Cardiac septum (tissue), 1 donor: ENCODE measurements at regions of chr2 and their contacts with region 1.

Region 1: DNA sequence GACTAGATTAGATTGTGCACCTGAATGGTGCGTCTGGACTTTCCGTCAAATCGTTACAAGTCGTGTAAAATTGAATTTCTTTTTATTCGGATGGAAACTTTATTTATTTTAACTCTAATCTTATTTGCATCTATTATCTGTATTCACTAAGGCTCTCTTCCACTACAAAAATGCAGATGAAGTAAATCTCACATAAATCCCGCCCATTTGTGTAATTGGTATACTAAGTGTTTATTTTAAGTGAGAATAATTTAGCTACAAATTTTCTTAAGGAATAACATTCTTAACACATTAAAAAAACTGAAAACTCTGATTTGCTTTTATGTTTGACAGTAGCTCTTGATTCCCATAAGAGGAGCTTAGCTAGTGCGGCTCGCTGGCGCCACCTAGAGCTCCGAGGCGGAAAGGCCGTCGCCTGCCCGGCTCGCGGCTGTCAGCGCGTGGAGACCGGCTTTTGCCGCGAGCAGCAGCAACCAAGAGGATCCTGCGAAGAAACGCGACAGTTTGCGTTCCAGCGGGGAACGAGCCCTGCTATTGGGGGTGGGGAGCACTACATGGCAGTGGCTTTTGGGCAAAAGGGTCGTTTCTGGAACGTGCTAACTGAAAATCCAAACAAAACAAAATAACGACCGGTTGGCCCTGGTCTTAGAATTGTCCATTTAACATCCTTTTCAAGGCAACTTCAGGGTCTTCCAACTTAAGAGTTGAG is 6.7 kb downstream of the SP9 start:
- DNase-seq: peak; percentile 94

Region 2: DNA sequence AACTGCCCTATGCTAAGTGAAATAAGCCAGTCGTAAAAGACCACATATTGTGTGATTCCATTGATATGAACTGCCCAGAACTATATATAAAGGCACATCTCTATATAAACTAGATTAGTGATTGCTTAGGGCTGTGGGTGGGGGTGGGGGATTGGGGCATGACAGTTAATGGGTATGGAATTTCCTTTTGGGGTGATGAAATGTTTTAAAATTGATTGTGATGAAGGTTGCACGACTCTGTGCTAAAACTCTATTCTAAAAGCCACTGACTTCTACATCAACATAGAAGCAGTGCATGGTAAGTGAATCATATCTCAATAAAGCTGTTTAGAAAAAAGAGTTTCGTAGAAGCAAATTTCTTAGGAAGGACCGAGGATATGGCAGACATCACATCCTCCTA is 933.8 kb before region 1 on chr2:
- intact Hi-C with region 1: loop called (anchors 2 kb)
- DNase-seq: no peak

Region 3: DNA sequence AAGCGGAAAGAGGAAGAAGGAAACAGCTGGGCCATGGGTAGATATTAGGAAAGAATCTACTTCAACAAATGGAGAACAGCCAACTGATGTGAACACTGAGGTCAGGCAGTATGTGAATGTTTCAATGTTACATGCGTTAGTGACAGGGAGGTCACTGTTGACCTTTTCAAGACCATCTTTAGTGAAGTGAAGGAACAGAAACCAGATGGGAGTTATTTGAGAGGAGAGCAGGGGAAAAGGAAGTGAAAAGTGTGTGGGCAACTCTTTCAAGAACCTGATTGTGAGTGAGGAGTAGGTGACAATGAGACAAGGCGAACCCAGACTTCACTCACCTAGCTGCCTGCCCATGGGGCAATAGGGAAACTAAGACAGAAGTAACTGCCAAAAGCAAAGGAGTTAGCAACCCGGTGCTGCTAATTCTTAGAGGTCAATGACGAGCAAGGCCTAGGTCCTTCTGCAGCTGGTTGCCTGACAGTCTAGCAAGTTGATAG is 443.2 kb before region 1 on chr2:
- intact Hi-C with region 1: loop called (anchors 10 kb)
- DNase-seq: no peak

Region 4: DNA sequence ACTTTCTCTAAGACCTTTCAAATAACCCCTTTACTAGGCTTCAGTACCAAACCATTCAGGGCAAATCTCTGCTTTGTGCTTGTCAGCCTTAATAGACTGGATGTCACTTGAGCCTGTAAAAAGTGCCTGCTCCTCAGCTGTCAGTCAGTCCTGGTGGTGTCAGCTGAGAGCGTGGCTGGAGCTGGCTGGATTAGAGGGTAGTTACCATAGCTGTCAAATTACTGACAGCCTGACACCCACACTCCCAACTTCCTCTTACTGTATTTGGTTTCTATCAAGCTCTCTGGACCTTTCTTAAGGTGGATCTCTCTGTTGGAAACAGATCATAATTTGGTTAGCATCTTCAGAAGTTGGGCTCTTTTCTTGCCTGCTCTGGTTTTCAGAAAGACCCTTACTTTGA is 1211.5 kb after region 1 on chr2:
- intact Hi-C with region 1: no loop called
- DNase-seq: no peak